B cell (primary cell): ENCODE measurements at regions of chr6 and their contacts with region 1.

Region 1: DNA sequence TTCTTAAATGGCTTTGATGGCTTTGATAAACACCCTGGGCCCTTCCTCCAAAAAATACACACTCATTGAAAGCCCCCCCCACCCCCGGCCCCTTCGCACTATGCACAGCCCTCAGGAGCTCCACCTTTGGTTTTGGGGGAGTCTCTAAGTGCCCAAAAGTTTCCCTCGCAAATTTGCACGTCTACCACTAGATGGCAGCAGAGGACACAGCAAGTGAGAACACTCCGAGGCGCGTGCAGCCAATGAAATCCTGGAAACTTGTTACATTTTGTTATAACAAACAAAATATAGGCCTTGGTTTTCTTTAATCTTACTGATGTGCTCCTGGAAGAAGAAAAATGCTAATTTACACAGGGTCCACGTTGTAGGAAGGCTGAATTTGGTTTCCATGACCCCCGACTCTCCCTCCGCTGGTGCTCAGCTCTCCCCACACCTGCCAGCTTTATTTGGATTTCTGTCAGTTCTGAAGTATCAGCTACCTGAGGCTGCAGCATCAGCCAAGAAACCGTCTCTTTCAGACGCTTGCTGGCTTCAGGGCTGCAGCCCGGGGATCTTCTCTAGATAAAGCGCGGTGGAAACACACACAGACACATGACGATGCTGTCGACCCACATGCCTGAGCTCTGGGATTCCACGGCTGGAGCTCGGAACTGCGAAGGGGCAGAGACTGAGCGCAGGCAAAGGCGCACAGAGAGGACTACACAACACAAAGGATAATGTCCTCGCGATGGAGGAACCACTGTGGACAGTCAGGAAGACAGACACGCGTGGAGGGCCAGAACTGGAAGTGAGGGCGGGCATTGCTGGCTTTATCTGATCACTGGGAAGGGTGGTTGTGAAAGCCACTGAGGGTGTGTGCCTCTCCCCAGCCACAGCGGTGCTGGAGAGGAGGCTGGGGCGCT is 148.4 kb upstream of the RPS6KA2 start:
- DNase-seq: peak; percentile 84
- ATAC-seq: peak; percentile 72
- H3K4me3 ChIP-seq: no peak overlapping the region
- H3K4me3 Mint-ChIP-seq: no peak overlapping the region
- H3K27ac ChIP-seq: no peak overlapping the region
- H3K27ac Mint-ChIP-seq: no peak overlapping the region
- H3K4me1 ChIP-seq: peaks cover 0 to 5% of the 10 kb centered on the region in 2 donors
- H3K4me1 Mint-ChIP-seq: peaks cover 2% of the 10 kb centered on the region
- H3K27me3 ChIP-seq: peaks cover 0 to 14% (median 6%) of the 10 kb centered on the region in 4 experiments
- H3K27me3 Mint-ChIP-seq: peaks cover 14% of the 10 kb centered on the region
- CTCF ChIP-seq: peak; percentile 85

Region 2: DNA sequence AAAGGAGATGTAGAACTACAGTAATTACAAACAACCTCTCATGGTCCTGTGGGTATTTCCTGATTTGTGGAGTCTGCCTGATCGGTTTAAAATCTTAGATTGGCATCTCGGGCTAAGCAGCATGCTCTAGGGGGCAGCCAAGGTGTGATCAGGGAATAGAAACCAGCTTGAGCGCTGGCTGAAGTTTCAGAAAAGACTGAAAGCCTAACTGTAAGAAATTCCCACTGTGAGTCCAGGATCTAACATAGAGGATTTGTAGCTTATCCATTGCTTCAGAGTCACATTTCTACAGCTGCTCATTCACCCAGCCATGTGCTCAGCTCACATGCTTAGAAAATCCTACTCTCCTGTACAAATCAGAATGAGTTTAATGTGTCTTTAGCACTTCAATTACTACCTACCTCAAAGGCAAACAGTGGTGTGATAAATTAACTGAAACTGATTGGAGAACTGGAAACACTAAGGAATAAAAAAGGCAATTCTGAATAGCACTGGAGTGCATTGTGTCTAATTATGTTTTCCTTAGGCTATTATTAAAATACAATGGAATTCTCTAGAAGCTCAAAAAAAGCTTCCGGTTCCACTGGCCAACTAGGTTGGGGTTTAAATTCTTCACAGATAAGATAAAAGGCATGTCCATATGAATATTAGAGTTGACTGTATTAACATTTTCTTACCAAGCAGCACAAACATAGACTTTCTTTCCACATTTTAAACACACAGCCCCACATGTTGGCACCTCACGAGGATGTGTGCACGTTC is 318.9 kb before region 1 on chr6:
- CTCF ChIA-PET with region 1: interaction called, 18 read pairs
- POLR2A ChIA-PET with region 1: no interaction called
- intact Hi-C with region 1: no loop called
- DNase-seq: peak; percentile 51
- ATAC-seq: peak; percentile 53
- H3K4me3 ChIP-seq: no peak overlapping the region
- H3K4me3 Mint-ChIP-seq: no peak overlapping the region
- H3K27ac ChIP-seq: no peak overlapping the region
- H3K27ac Mint-ChIP-seq: no peak overlapping the region
- H3K4me1 ChIP-seq: peaks cover 12 to 13% of the 10 kb centered on the region in 2 donors
- H3K4me1 Mint-ChIP-seq: peaks cover 18% of the 10 kb centered on the region
- H3K27me3 ChIP-seq: no peaks in the 10 kb centered on the region
- H3K27me3 Mint-ChIP-seq: no peaks in the 10 kb centered on the region
- CTCF ChIP-seq: peak; percentile 29

Region 3: DNA sequence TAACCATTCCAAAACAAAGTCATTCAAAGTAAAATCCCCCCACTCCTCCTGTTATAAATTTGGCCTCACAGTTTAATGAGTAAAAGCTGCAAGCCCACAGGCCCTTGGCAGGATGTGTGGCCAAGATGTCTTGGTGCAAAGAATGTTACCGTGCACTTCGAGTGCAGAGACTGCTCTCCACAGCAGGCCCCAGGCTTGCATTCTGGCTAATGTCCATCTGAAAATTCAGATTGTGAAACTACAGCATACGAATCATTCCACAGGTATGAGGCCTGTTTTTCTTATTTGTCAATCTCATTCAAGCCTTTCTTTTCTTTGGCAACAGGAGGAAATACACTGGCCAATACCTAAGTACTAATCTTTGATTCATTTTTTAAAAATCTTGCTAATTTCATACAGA is 155.5 kb before region 1 on chr6:
- CTCF ChIA-PET with region 1: no interaction called
- POLR2A ChIA-PET with region 1: no interaction called
- intact Hi-C with region 1: no loop called
- DNase-seq: no peak
- ATAC-seq: no peak
- H3K4me3 ChIP-seq: no peak overlapping the region
- H3K4me3 Mint-ChIP-seq: no peak overlapping the region
- H3K27ac ChIP-seq: no peak overlapping the region
- H3K27ac Mint-ChIP-seq: no peak overlapping the region
- H3K4me1 ChIP-seq: no peaks in the 10 kb centered on the region
- H3K4me1 Mint-ChIP-seq: peaks cover 4% of the 10 kb centered on the region
- H3K27me3 ChIP-seq: no peaks in the 10 kb centered on the region
- H3K27me3 Mint-ChIP-seq: no peaks in the 10 kb centered on the region
- CTCF ChIP-seq: no peak

Region 4: GRCh38 chr6:166751051-166751595 is 24.3 kb before region 1 on chr6:
- CTCF ChIA-PET with region 1: interaction called, 8 read pairs
- POLR2A ChIA-PET with region 1: no interaction called
- intact Hi-C with region 1: loop called (anchors 2 kb)
- DNase-seq: peak; percentile 73
- ATAC-seq: peak; percentile 98
- H3K4me3 ChIP-seq: peak overlapping the region in 4 of 5 experiments; percentile 33 to 83 (median 59)
- H3K4me3 Mint-ChIP-seq: peak overlapping the region; percentile 93
- H3K27ac ChIP-seq: peak overlapping the region; percentile 21 to 54
- H3K27ac Mint-ChIP-seq: peak overlapping the region; percentile 84
- H3K4me1 ChIP-seq: peaks cover 26 to 34% of the 10 kb centered on the region in 2 donors
- H3K4me1 Mint-ChIP-seq: peaks cover 26% of the 10 kb centered on the region
- H3K27me3 ChIP-seq: peaks cover 0 to 28% (median 7%) of the 10 kb centered on the region in 4 experiments
- H3K27me3 Mint-ChIP-seq: peaks cover 15% of the 10 kb centered on the region
- CTCF ChIP-seq: no peak

Region 5: DNA sequence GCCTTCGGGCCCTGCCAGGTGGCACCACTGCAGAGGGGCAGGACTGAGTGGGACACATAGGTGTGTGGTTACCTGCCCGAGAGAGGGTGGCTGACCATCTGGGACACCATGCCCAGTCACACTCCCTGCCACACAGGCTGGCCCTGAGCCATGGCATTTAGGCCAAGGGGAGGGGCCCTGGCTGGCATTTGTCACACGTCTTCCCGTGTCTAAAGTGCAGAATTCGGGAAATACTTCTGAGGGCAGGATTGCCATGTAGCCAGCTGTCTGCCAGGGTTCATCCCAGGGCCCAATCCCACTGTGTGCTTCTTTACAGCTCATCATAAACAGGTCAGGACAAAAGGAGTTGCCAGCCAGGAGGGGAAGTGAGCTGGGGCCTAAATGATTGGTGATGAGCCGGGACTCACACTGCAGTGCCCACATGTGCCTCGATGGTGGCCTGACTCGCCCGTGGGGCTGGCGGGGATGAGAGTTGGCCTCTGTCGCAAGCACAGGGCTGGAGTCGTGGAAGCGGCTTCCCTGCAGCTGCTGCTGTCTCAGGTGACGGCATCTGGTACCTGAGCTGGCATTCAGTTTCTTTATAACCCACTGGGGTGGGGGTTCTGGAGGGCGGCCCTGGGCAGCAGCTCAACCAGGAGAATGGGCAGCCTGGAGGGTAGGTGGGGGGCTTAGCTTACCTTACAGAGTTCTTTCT is 509.8 kb after region 1 on chr6:
- CTCF ChIA-PET with region 1: interaction called, 53 read pairs
- POLR2A ChIA-PET with region 1: no interaction called
- intact Hi-C with region 1: loop called (anchors 1 kb)
- DNase-seq: no peak
- ATAC-seq: no peak
- H3K4me3 ChIP-seq: no peak overlapping the region
- H3K4me3 Mint-ChIP-seq: no peak overlapping the region
- H3K27ac ChIP-seq: no peak overlapping the region
- H3K27ac Mint-ChIP-seq: no peak overlapping the region
- H3K4me1 ChIP-seq: no peaks in the 10 kb centered on the region
- H3K4me1 Mint-ChIP-seq: no peaks in the 10 kb centered on the region
- H3K27me3 ChIP-seq: peaks cover 0 to 7% (median 0%) of the 10 kb centered on the region in 4 experiments
- H3K27me3 Mint-ChIP-seq: peaks cover 17% of the 10 kb centered on the region
- CTCF ChIP-seq: no peak

Region 6: GRCh38 chr6:167291623-167292300 is 516.3 kb after region 1 on chr6:
- CTCF ChIA-PET with region 1: interaction called, 53 read pairs
- POLR2A ChIA-PET with region 1: no interaction called
- intact Hi-C with region 1: loop called (anchors 1 kb)
- DNase-seq: no peak
- ATAC-seq: no peak
- H3K4me3 ChIP-seq: no peak overlapping the region
- H3K4me3 Mint-ChIP-seq: no peak overlapping the region
- H3K27ac ChIP-seq: no peak overlapping the region
- H3K27ac Mint-ChIP-seq: no peak overlapping the region
- H3K4me1 ChIP-seq: no peaks in the 10 kb centered on the region
- H3K4me1 Mint-ChIP-seq: no peaks in the 10 kb centered on the region
- H3K27me3 ChIP-seq: peaks cover 0 to 5% (median 2%) of the 10 kb centered on the region in 4 experiments
- H3K27me3 Mint-ChIP-seq: peaks cover 22% of the 10 kb centered on the region
- CTCF ChIP-seq: no peak